MCF 10A (cell line): ENCODE measurements at regions of chr18 and their contacts with region 1.

Region 1: GRCh38 chr18:34707670-34708069 is 2.4 kb upstream of the DTNA start:
- DNase-seq: peak; percentile 95
- H3K4me3 Mint-ChIP-seq: no peak overlapping the region
- H3K27ac Mint-ChIP-seq: peak overlapping the region; percentile 29
- H3K4me1 Mint-ChIP-seq: peaks cover 19% of the 10 kb centered on the region
- H3K27me3 Mint-ChIP-seq: no peaks in the 10 kb centered on the region
- CTCF ChIP-seq: no peak

Region 2: DNA sequence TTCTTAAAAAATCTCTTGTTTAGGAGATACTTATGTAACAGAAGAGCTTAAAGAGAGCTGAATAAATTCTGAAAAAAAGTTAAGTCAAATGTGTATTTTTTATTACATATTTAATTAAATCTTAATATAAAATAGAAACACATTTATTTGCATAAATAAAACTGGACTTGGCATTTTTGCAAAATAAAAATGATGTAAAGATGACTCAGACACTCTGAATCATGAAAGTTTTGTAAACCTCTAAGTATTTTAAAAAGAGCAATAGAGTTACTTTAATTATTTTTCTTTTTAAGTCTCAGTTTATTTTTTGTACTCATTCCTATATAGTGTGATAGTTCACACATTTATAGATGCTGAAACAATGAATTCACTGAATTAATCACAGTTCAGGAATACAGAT is 107.6 kb before region 1 on chr18:
- CTCF ChIA-PET with region 1: no interaction called
- POLR2A ChIA-PET with region 1: no interaction called
- intact Hi-C with region 1: loop called (anchors 5 kb)
- DNase-seq: peak; percentile 16
- H3K4me3 Mint-ChIP-seq: no peak overlapping the region
- H3K27ac Mint-ChIP-seq: no peak overlapping the region
- H3K4me1 Mint-ChIP-seq: no peaks in the 10 kb centered on the region
- H3K27me3 Mint-ChIP-seq: peaks cover 11% of the 10 kb centered on the region
- CTCF ChIP-seq: no peak

Region 3: GRCh38 chr18:34723143-34723542 is 15.5 kb after region 1 on chr18:
- CTCF ChIA-PET with region 1: interaction called, 5 read pairs
- POLR2A ChIA-PET with region 1: interaction called, 17 read pairs
- intact Hi-C with region 1: no loop called
- DNase-seq: no peak
- H3K4me3 Mint-ChIP-seq: no peak overlapping the region
- H3K27ac Mint-ChIP-seq: no peak overlapping the region
- H3K4me1 Mint-ChIP-seq: no peaks in the 10 kb centered on the region
- H3K27me3 Mint-ChIP-seq: no peaks in the 10 kb centered on the region
- CTCF ChIP-seq: no peak